Ovary (tissue), 10 donors: ENCODE measurements at regions of chr12 and their contacts with region 1.

Region 1: GRCh38 chr12:113221181-113221997 is at the start of gene TPCN1:
- DNase-seq: peak; percentile 99 to 100 (median 100)
- H3K4me3 ChIP-seq: peak within 1 kb of the TSS; percentile 91
- H3K27ac ChIP-seq: peak within 1 kb of the TSS; percentile 76 to 84
- H3K4me1 ChIP-seq: peaks cover 8% of the 10 kb centered on the region
- H3K27me3 ChIP-seq: no peaks in the 10 kb centered on the region
- CTCF ChIP-seq: peak in 2 of 3 donors; percentile 32 to 53
- EP300 ChIP-seq: no peak
- POLR2A ChIP-seq: peak; percentile 98
- total RNA-seq, gene TPCN1: 29.8 to 65.6 (median 54.8) TPM

Region 2: DNA sequence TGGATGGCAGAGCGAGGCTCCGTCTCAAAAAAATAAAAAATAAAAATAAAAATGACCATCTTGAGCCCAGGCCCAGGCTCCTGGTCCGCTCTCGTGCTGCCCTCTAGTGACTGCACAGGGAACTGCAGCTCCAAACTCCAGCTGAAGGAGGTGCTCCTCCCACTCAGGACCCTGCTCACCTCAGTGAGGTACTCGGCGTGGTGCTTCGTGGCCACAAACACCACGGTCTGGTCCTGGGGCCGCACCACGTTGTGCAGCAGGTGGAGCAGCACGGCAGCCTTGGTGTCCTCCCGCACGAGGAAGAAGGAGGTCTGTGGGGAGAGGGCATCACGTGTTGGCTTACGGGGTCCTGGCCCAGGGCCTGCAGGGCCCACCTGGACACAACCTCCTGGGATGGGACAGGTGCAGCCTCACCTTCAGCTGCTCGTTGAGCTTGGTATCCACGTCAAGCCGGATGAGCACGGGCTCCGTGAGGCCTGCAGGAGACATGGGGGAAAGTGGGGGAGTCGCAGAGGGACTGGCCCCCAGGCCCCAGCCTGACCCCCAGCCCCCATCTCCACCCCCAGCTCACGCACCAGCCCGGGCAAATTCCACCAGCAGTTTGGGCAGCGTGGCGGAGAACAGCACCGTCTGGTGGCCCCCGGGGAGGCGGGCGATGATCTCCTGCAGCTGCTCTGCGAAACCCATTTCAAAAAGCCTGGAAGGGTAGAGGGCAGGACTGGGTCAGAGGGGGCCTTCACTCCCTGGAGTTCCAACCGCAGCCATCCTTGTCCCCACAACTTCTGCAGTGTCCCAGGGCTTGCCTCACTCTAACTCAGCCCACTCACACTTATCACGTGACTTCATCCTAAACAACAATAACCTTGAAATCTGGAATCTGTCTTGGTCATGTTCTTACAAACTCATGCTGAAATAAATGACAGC is 46.7 kb before region 1 on chr12:
- intact Hi-C with region 1: no loop called
- DNase-seq: peak; percentile 51 to 85 (median 76)
- H3K4me3 ChIP-seq: no peak overlapping the region
- H3K27ac ChIP-seq: no peak overlapping the region
- H3K4me1 ChIP-seq: peaks cover 4% of the 10 kb centered on the region
- H3K27me3 ChIP-seq: no peaks in the 10 kb centered on the region
- CTCF ChIP-seq: peak; percentile 70 to 82 (median 75)
- EP300 ChIP-seq: no peak
- POLR2A ChIP-seq: no peak

Region 3: GRCh38 chr12:113267621-113268395 is 46.4 kb after region 1 on chr12:
- intact Hi-C with region 1: loop called in 1 of 4 experiments (anchors 2 kb)
- DNase-seq: peak in 2 of 5 donors; percentile 22 to 31
- H3K4me3 ChIP-seq: no peak overlapping the region
- H3K27ac ChIP-seq: no peak overlapping the region
- H3K4me1 ChIP-seq: peaks cover 15% of the 10 kb centered on the region
- H3K27me3 ChIP-seq: no peaks in the 10 kb centered on the region
- CTCF ChIP-seq: no peak
- EP300 ChIP-seq: no peak
- POLR2A ChIP-seq: no peak